ENCODE measurements at regions of chr13 and their contacts with region 1.

Region 1: DNA sequence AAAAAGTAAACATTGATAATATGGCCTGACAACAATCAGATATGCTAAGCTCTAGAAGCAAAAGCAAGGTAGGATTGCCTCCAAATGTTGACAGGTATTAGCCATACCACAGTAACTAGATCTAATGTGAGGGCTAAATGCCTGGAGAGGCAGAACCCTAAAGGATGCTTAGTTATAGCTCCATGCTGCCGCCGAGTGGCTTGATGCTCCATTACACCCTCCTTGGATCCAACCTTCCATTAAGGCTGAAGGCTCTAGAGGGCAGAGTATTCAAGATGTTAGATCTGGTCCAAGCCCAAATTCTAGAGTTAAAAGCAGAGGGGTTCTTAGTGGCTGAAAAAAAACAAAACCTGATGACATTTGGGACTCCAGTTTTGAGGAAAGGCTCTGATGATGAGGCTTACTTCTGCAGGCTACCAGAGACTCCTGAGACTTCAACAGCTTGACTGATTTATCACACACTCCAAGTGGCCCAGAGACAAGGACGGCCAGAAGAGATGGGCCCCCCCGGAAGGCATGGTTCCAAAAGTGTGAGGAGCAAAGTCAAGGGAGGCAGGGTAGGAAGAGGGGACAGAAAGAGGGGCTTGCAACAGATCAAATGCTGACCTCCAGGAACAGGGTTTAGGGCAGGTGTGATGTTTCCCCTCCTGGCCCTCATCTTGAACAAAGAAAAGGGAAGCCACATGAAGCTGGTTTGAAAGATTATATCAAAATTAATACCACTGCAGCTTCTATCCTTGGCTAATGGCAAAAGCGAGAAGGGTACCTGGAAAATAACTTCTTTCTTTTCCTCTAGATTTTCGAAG is 21.9 kb upstream of the CPB2 start:
- DNase-seq: peak; percentile 44 to 74 (median 66)
- ATAC-seq: peak; percentile 94
- H3K4me3 ChIP-seq: no peak overlapping the region
- H3K4me3 Mint-ChIP-seq: peak overlapping the region in 3 of 10 donors; percentile 6 to 34 (median 8)
- H3K27ac ChIP-seq: peak overlapping the region; percentile 66
- H3K27ac Mint-ChIP-seq: peak overlapping the region; percentile 60 to 96 (median 87)
- H3K4me1 ChIP-seq: peaks cover 11 to 31% of the 10 kb centered on the region in 2 donors
- H3K4me1 Mint-ChIP-seq: peaks cover 35 to 54% (median 49%) of the 10 kb centered on the region in 7 donors
- H3K27me3 ChIP-seq: no peaks in the 10 kb centered on the region
- H3K27me3 Mint-ChIP-seq: peaks cover 0 to 2% (median 0%) of the 10 kb centered on the region in 5 donors

Region 2: GRCh38 chr13:45623515-45624090 is 503.2 kb before region 1 on chr13:
- CTCF ChIA-PET with region 1: interaction called, 7 read pairs
- POLR2A ChIA-PET with region 1: no interaction called
- intact Hi-C with region 1: loop called (anchors 1 kb)
- DNase-seq: peak in 4 of 9 donors; percentile 9 to 38 (median 20)
- ATAC-seq: no peak
- H3K4me3 ChIP-seq: no peak overlapping the region
- H3K4me3 Mint-ChIP-seq: no peak overlapping the region
- H3K27ac ChIP-seq: no peak overlapping the region
- H3K27ac Mint-ChIP-seq: no peak overlapping the region
- H3K4me1 ChIP-seq: no peaks in the 10 kb centered on the region
- H3K4me1 Mint-ChIP-seq: peaks cover 0 to 1% (median 0%) of the 10 kb centered on the region in 7 donors
- H3K27me3 ChIP-seq: no peaks in the 10 kb centered on the region
- H3K27me3 Mint-ChIP-seq: peaks cover 27 to 49% (median 38%) of the 10 kb centered on the region in 5 donors

Region 3: DNA sequence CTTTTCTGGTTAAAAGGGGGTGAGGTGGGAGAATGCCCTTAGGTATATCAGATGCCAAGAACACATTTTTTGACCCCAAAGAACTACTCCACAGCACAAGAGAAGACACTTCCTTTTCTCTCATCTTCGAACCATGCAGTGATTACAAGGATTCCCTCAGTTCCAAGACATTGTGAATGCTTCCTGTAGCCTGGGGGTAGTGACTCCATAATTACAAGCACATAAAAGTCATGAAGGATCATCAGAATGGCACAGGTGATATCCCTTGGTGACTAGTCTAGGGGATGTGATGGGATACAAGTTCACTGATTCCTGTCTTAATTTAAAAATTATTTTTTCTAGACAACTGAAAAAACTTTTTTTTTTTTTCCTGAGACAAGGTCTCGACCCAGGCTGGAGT is 152.3 kb before region 1 on chr13:
- CTCF ChIA-PET with region 1: no interaction called
- POLR2A ChIA-PET with region 1: interaction called, 4 read pairs
- intact Hi-C with region 1: loop called in 1 of 2 experiments (anchors 10 kb)
- DNase-seq: no peak
- ATAC-seq: no peak
- H3K4me3 ChIP-seq: no peak overlapping the region
- H3K4me3 Mint-ChIP-seq: no peak overlapping the region
- H3K27ac ChIP-seq: no peak overlapping the region
- H3K27ac Mint-ChIP-seq: peak overlapping the region in 1 of 9 donors; percentile 63
- H3K4me1 ChIP-seq: no peaks in the 10 kb centered on the region
- H3K4me1 Mint-ChIP-seq: peaks cover 0 to 18% (median 6%) of the 10 kb centered on the region in 7 donors
- H3K27me3 ChIP-seq: no peaks in the 10 kb centered on the region
- H3K27me3 Mint-ChIP-seq: no peaks in the 10 kb centered on the region

Region 4: DNA sequence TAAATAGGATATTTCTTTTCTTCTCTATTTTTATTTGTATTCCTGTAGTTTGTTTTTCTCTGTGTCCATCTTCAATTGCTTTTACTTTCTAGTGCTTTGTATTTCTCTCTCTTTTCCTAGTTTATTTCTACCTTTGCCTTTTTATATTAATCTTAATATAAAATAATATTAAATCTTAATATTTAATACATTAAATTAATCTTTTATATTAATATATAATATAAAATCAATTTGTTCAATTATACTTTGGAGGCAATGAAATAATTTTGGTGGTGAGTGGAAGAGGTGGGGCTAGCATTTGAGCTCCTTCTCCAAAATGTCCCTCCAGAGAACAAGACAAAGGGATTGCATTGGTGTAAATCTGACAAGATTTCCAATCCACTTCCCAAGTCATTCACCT is 15.6 kb before region 1 on chr13:
- CTCF ChIA-PET with region 1: no interaction called
- POLR2A ChIA-PET with region 1: no interaction called
- intact Hi-C with region 1: no loop called
- DNase-seq: no peak
- ATAC-seq: no peak
- H3K4me3 ChIP-seq: no peak overlapping the region
- H3K4me3 Mint-ChIP-seq: no peak overlapping the region
- H3K27ac ChIP-seq: no peak overlapping the region
- H3K27ac Mint-ChIP-seq: no peak overlapping the region
- H3K4me1 ChIP-seq: peaks cover 0 to 4% of the 10 kb centered on the region in 2 donors
- H3K4me1 Mint-ChIP-seq: peaks cover 5 to 15% (median 11%) of the 10 kb centered on the region in 7 donors
- H3K27me3 ChIP-seq: peaks cover 0 to 5% of the 10 kb centered on the region in 2 donors
- H3K27me3 Mint-ChIP-seq: peaks cover 12 to 40% (median 17%) of the 10 kb centered on the region in 5 donors

Region 5: GRCh38 chr13:46146899-46147298 is 20.1 kb after region 1 on chr13:
- CTCF ChIA-PET with region 1: interaction called, 5 read pairs
- POLR2A ChIA-PET with region 1: interaction called, 4 read pairs
- intact Hi-C with region 1: loop called in 1 of 2 experiments (anchors 2 kb)
- DNase-seq: no peak
- ATAC-seq: no peak
- H3K4me3 ChIP-seq: no peak overlapping the region
- H3K4me3 Mint-ChIP-seq: no peak overlapping the region
- H3K27ac ChIP-seq: no peak overlapping the region
- H3K27ac Mint-ChIP-seq: peak overlapping the region; percentile 2 to 77 (median 51)
- H3K4me1 ChIP-seq: no peaks in the 10 kb centered on the region
- H3K4me1 Mint-ChIP-seq: peaks cover 12 to 47% (median 27%) of the 10 kb centered on the region in 7 donors
- H3K27me3 ChIP-seq: no peaks in the 10 kb centered on the region
- H3K27me3 Mint-ChIP-seq: no peaks in the 10 kb centered on the region

Region 6: GRCh38 chr13:46288570-46289259 is 162.0 kb after region 1 on chr13:
- CTCF ChIA-PET with region 1: interaction called, 7 read pairs
- POLR2A ChIA-PET with region 1: interaction called, 3 read pairs
- intact Hi-C with region 1: loop called (anchors 1 to 2 kb)
- DNase-seq: peak in 7 of 9 donors; percentile 46 to 75 (median 70)
- ATAC-seq: peak; percentile 84
- H3K4me3 ChIP-seq: no peak overlapping the region
- H3K4me3 Mint-ChIP-seq: no peak overlapping the region
- H3K27ac ChIP-seq: no peak overlapping the region
- H3K27ac Mint-ChIP-seq: peak overlapping the region in 3 of 9 donors; percentile 8 to 18 (median 16)
- H3K4me1 ChIP-seq: peaks cover 0 to 17% of the 10 kb centered on the region in 2 donors
- H3K4me1 Mint-ChIP-seq: peaks cover 4 to 29% (median 15%) of the 10 kb centered on the region in 7 donors
- H3K27me3 ChIP-seq: no peaks in the 10 kb centered on the region
- H3K27me3 Mint-ChIP-seq: no peaks in the 10 kb centered on the region